ENCODE measurements at regions of chr9 and their contacts with region 1.

Region 1: GRCh38 chr9:91207729-91208418 is 153.8 kb downstream of the AUH start:
- DNase-seq: peak; percentile 83
- H3K4me3 Mint-ChIP-seq: peak overlapping the region; percentile 68
- H3K27ac Mint-ChIP-seq: peak overlapping the region; percentile 98
- H3K4me1 Mint-ChIP-seq: peaks cover 46% of the 10 kb centered on the region
- H3K27me3 Mint-ChIP-seq: no peaks in the 10 kb centered on the region

Region 2: DNA sequence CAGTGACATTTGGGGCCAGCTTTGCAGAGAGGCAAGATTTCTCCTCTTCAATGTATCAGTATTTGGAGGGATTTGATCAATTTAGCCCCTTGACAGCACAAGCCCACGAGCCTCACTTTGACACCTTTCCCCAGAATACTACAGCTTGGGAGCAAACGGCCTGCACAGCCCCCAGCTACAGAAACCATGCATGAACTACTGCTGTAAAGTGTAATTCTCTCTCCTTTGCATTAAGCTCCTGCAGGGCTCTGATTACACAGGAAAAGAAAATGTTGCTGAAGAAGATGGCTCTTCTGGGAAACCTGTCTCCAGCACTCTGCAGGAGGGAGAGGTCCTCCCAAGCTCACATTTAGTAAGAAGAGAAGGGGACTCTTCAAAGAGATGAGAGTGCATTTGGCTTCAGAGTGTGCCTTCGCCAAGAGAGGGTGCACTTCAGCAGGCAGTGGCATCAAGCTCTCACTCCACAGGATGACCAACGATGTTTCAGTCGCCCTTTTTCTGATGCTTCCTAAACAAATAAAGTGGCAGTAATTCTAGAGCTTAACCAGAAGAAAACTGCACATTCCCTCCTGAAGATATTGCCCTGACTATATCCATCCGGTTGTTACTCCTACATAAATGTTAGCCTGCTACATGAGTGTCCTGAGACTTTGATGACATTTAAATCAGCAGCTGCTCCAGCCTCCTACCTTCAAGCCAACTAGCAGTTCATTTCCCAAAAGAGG is 118.3 kb before region 1 on chr9:
- intact Hi-C with region 1: loop called (anchors 5 kb)
- DNase-seq: peak; percentile 76
- H3K4me3 Mint-ChIP-seq: no peak overlapping the region
- H3K27ac Mint-ChIP-seq: peak overlapping the region; percentile 54
- H3K4me1 Mint-ChIP-seq: peaks cover 57% of the 10 kb centered on the region
- H3K27me3 Mint-ChIP-seq: no peaks in the 10 kb centered on the region

Region 3: DNA sequence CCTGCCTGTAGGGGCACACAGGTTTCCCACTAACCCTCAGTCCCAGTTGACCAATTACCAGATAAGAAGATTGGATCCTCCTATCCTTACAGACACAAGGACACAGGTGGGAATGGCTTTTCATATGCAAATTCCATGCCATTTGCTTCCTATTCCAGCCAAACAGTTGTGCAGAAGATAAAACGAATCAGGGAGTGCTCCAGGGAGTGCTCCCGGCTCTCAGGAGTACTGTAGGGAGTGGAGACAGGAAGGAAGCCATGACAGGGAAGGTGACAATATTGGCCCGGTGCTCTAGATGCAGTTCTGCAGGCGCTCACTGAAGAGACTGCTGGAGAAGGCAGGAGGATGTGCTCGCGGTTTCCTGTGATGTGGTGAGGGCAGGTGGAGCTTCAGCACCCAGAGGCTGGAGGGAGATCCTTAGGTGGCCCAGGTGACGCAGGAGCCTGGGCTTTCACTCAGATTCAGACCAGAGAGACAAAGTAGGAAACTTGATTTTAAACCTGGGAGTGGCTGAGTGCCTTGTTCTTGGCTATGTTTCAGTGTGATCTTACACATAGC is 106.2 kb before region 1 on chr9:
- intact Hi-C with region 1: loop called (anchors 1 kb)
- DNase-seq: peak; percentile 97
- H3K4me3 Mint-ChIP-seq: peak overlapping the region; percentile 70
- H3K27ac Mint-ChIP-seq: peak overlapping the region; percentile 89
- H3K4me1 Mint-ChIP-seq: peaks cover 67% of the 10 kb centered on the region
- H3K27me3 Mint-ChIP-seq: no peaks in the 10 kb centered on the region

Region 4: DNA sequence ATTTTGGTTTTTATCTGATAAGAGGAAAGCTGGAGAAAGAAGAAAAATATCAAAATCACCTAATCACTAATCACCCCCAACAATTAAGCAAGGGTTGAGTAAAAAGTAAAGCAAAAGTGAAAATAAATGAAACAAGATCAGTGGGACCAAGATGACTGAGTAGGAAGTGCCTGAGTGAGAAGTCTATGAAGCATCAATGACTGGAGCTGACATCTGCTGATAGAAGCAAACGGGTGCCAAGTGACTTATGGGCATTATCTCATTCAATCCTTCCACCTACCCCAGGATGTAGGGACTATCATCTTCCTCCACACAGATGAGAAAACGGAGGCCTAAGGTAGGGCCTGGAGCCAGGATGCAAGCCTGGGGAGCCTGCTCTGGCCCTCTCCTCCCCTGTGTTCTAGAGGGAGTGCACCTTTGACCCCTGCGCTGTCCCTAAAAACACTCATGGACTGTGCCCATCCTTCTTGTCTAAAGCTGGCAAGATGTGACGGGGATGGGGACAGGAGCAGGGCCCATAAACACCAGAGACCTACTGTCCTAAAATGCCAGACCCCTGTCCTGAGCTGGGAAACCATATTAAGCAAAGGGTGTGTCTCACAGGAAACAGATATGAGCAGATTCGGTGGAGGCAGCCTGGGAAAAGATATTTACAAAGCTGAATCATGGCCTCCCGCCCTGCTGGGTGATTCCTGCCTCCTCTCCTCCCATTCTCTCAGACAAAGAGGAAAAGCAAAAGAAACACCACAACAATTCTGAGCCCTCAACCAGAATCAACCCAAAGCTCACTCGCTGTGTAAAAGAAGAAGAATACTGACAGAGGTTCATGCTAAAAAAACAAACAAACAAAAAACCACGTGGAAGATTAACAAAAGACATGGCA is 37.8 kb after region 1 on chr9:
- intact Hi-C with region 1: loop called (anchors 2 kb)
- DNase-seq: peak; percentile 76
- H3K4me3 Mint-ChIP-seq: peak overlapping the region; percentile 37
- H3K27ac Mint-ChIP-seq: peak overlapping the region; percentile 84
- H3K4me1 Mint-ChIP-seq: peaks cover 35% of the 10 kb centered on the region
- H3K27me3 Mint-ChIP-seq: no peaks in the 10 kb centered on the region

Region 5: DNA sequence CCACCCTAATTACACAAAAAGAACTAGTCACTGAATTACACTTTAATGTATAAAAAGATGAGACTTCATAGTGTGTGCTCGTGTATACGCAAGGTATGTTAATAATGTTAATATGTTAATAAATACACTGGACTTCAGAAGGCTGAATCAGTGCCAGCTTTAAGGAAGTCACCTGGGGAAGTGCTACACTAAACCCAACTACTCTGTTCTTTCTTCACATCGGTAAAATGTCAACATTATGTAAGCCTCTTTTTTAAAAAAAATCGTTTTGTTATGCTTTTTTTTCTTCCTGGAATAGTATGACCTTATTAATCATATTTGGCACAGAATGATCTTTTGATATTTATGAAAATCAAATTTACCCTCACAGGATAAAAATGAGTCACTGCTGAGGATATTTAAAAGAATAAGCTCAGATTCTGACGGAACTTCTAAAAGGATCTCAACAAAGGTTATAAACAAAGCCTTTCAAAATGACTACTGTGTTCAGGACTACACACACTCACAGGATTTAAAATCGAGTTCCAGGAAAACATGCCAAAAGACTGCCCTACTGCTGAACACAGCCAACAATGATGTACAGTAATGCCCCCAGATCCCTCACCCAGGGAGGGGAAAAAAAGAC is 78.0 kb after region 1 on chr9:
- intact Hi-C with region 1: no loop called
- DNase-seq: no peak
- H3K4me3 Mint-ChIP-seq: no peak overlapping the region
- H3K27ac Mint-ChIP-seq: no peak overlapping the region
- H3K4me1 Mint-ChIP-seq: peaks cover 18% of the 10 kb centered on the region
- H3K27me3 Mint-ChIP-seq: no peaks in the 10 kb centered on the region

Region 6: GRCh38 chr9:91359734-91360470 is 152.0 kb after region 1 on chr9:
- intact Hi-C with region 1: loop called (anchors 1 kb)
- DNase-seq: peak; percentile 74
- H3K4me3 Mint-ChIP-seq: peak overlapping the region; percentile 93
- H3K27ac Mint-ChIP-seq: peak overlapping the region; percentile 99
- H3K4me1 Mint-ChIP-seq: peaks cover 58% of the 10 kb centered on the region
- H3K27me3 Mint-ChIP-seq: no peaks in the 10 kb centered on the region